Heart left ventricle (tissue), 16 donors: ENCODE measurements at regions of chr1 and their contacts with region 1.

Region 1: GRCh38 chr1:47333922-47334764 is 553 bp downstream of the CMPK1 start:
- DNase-seq: peak; percentile 80 to 91 (median 89)
- ATAC-seq: peak; percentile 84 to 96 (median 94)
- H3K4me3 ChIP-seq: peak overlapping the region; percentile 59 to 98 (median 90)
- H3K27ac ChIP-seq: peak overlapping the region; percentile 94 to 99 (median 98)
- H3K4me1 ChIP-seq: peaks cover 3 to 42% (median 29%) of the 10 kb centered on the region in 12 donors
- H3K27me3 ChIP-seq: no peaks in the 10 kb centered on the region
- CTCF ChIP-seq: peak in 7 of 12 donors; percentile 7 to 56 (median 30)
- POLR2A ChIP-seq: peak in 1 of 2 donors; percentile 45

Region 2: GRCh38 chr1:47211796-47212269 is 122.3 kb before region 1 on chr1:
- intact Hi-C with region 1: no loop called
- DNase-seq: peak; percentile 53 to 79 (median 70)
- ATAC-seq: peak; percentile 77 to 95 (median 82)
- H3K4me3 ChIP-seq: peak overlapping the region in 4 of 12 donors; percentile 4 to 22 (median 18)
- H3K27ac ChIP-seq: peak overlapping the region; percentile 38 to 88 (median 72)
- H3K4me1 ChIP-seq: peaks cover 0 to 22% (median 8%) of the 10 kb centered on the region in 12 donors
- H3K27me3 ChIP-seq: peaks cover 0 to 18% (median 4%) of the 10 kb centered on the region in 9 donors
- CTCF ChIP-seq: no peak
- POLR2A ChIP-seq: no peak

Region 3: GRCh38 chr1:47298025-47298699 is 36.0 kb before region 1 on chr1:
- intact Hi-C with region 1: no loop called
- DNase-seq: no peak
- ATAC-seq: peak; percentile 58 to 91 (median 66)
- H3K4me3 ChIP-seq: peak overlapping the region in 3 of 12 donors; percentile 9 to 16 (median 13)
- H3K27ac ChIP-seq: peak overlapping the region; percentile 35 to 84 (median 73)
- H3K4me1 ChIP-seq: peaks cover 0 to 23% (median 9%) of the 10 kb centered on the region in 12 donors
- H3K27me3 ChIP-seq: no peaks in the 10 kb centered on the region
- CTCF ChIP-seq: no peak
- POLR2A ChIP-seq: no peak

Region 4: DNA sequence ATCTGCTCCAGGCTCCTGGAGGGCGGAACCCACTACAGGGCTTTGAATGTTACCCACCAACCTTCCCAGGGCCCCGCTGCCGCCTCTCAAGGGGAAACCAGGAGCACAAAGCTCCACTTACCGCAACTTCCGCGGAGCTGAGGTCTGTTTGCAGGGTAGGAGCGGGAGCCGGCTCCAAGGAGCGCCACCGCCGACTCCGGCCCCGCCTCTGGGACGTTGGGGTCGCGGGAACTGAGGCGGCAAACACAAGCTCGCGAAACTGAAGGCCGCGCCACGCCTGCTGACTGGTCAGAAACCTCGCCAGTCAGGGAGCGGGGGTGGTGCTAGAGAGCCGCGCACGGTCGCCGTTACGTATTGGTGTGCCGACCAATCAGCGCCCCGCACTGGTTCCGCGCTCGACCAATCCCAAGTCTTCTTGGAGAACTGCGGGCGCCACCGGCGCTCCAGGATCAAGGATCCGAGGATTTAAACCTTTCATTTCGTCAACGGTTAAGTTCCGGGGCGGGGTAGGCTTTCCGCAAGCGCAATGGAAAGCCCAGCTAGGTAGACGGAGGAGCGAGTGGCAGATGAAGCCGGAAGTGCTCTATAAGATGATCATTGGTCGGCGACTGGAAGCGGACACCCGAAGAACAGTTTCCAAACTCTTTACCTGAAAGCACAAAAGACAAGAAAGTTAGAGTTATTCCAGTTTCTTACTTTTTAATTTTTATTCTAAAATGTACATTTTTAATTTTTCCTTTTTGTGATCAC is 20.1 kb before region 1 on chr1 and contains the start of gene STIL:
- intact Hi-C with region 1: loop called in 5 of 10 experiments (anchors 1 to 2 kb)
- DNase-seq: peak; percentile 98 to 99 (median 99)
- ATAC-seq: peak; percentile 100
- H3K4me3 ChIP-seq: peak within 1 kb of the TSS; percentile 32 to 88 (median 68)
- H3K27ac ChIP-seq: peak within 1 kb of the TSS in 11 of 12 donors; percentile 60 to 90 (median 78)
- H3K4me1 ChIP-seq: peaks cover 0 to 13% (median 7%) of the 10 kb centered on the region in 12 donors
- H3K27me3 ChIP-seq: no peaks in the 10 kb centered on the region
- CTCF ChIP-seq: peak in 3 of 12 donors; percentile 25 to 38 (median 26)
- POLR2A ChIP-seq: peak in 1 of 2 donors; percentile 38
- total RNA-seq, gene STIL: 0.30 to 3.1 (median 0.81) TPM

Region 5: GRCh38 chr1:48007044-48007443 is 672.9 kb after region 1 on chr1:
- intact Hi-C with region 1: loop called in 1 of 10 experiments (anchors 5 kb)
- DNase-seq: no peak
- ATAC-seq: peak in 3 of 4 donors; percentile 39 to 83 (median 42)
- H3K4me3 ChIP-seq: no peak overlapping the region
- H3K27ac ChIP-seq: no peak overlapping the region
- H3K4me1 ChIP-seq: peaks cover 0 to 4% (median 0%) of the 10 kb centered on the region in 12 donors
- H3K27me3 ChIP-seq: no peaks in the 10 kb centered on the region
- CTCF ChIP-seq: no peak
- POLR2A ChIP-seq: no peak